Heart left ventricle (tissue), 16 donors: ENCODE measurements at regions of chr5 and their contacts with region 1.

Region 1: DNA sequence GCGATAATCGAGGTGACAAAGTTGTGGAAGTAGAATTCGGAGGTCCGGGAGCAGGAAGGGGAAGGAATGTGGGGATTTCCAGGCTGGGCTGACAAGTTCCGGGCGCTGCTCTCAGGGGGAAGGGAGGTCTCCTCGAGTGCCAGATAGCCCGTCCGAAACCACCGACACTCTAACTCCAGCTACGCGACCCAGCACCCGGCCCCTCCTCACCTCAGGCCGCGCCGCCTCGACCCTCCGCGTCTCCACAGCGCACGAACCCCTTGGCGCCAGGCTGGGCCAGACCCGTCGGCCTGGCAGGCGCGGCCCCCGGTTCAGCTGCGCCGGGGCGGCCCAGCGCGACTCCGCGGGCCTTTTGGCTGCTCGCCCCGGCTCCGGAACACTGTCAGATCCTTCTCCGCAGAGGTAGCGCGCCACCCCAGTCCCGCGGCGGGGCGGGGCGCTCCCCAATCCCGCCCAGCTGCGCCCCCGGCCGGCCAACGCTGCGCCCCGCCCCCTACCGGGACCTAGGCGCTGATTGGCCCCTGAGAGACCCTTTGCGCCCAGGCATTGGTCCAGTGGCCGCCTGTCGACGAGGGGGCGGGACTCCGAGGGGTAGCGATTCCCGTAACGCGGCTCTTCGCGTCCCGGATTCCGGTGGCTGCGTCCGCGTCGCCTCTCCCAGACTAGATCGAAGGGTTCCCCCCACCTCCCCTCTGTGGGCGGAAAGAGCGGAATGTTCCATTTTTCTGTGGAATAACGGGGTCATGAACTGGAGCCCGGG is at the start of gene IL6ST:
- DNase-seq: peak; percentile 98 to 99 (median 99)
- ATAC-seq: peak; percentile 98 to 99 (median 98)
- H3K4me3 ChIP-seq: peak within 1 kb of the TSS; percentile 55 to 95 (median 82)
- H3K27ac ChIP-seq: peak within 1 kb of the TSS; percentile 98 to 100 (median 99)
- H3K4me1 ChIP-seq: peaks cover 3 to 46% (median 28%) of the 10 kb centered on the region in 12 donors
- H3K27me3 ChIP-seq: no peaks in the 10 kb centered on the region
- CTCF ChIP-seq: peak in 8 of 12 donors; percentile 14 to 59 (median 26)
- POLR2A ChIP-seq: peak; percentile 51 to 93
- total RNA-seq, gene IL6ST: 106 to 239 (median 160) TPM

Region 2: GRCh38 chr5:55885359-55885758 is 109.4 kb before region 1 on chr5:
- intact Hi-C with region 1: no loop called
- DNase-seq: no peak
- ATAC-seq: no peak
- H3K4me3 ChIP-seq: no peak overlapping the region
- H3K27ac ChIP-seq: no peak overlapping the region
- H3K4me1 ChIP-seq: no peaks in the 10 kb centered on the region
- H3K27me3 ChIP-seq: no peaks in the 10 kb centered on the region
- CTCF ChIP-seq: no peak
- POLR2A ChIP-seq: no peak

Region 3: GRCh38 chr5:56039985-56040384 is 45.2 kb after region 1 on chr5:
- intact Hi-C with region 1: loop called in 1 of 10 experiments (anchors 5 kb)
- DNase-seq: no peak
- ATAC-seq: no peak
- H3K4me3 ChIP-seq: no peak overlapping the region
- H3K27ac ChIP-seq: peak overlapping the region in 1 of 12 donors; percentile 60
- H3K4me1 ChIP-seq: peaks cover 0 to 35% (median 4%) of the 10 kb centered on the region in 12 donors
- H3K27me3 ChIP-seq: no peaks in the 10 kb centered on the region
- CTCF ChIP-seq: no peak
- POLR2A ChIP-seq: no peak

Region 4: GRCh38 chr5:56056875-56057274 is 62.1 kb after region 1 on chr5:
- intact Hi-C with region 1: loop called in 3 of 10 experiments (anchors 5 kb)
- DNase-seq: no peak
- ATAC-seq: no peak
- H3K4me3 ChIP-seq: no peak overlapping the region
- H3K27ac ChIP-seq: no peak overlapping the region
- H3K4me1 ChIP-seq: peaks cover 0 to 30% (median 8%) of the 10 kb centered on the region in 12 donors
- H3K27me3 ChIP-seq: no peaks in the 10 kb centered on the region
- CTCF ChIP-seq: no peak
- POLR2A ChIP-seq: no peak

Region 5: DNA sequence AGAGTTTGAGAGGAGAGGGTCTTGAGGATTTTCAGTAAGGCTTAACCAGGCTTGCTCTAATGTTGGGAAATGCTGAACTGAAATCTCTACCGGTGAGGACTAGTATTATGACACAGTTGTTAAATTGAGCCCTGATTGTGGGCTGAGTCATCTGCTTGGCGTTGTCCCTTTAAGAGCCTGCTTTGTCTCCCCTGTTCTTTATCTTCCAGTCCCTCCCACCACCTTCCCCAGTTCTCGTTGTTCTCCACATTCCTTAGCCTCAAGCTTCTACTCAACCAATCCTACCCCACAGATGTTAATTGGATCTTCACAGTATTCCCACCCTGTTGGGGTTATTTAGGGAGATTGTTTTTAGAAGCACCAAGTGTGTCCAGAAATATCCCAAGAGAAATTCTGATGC is 180.7 kb after region 1 on chr5:
- intact Hi-C with region 1: loop called in 4 of 10 experiments (anchors 5 to 10 kb)
- DNase-seq: peak in 4 of 5 donors; percentile 35 to 49 (median 39)
- ATAC-seq: peak; percentile 53 to 90 (median 82)
- H3K4me3 ChIP-seq: no peak overlapping the region
- H3K27ac ChIP-seq: peak overlapping the region in 9 of 12 donors; percentile 11 to 66 (median 49)
- H3K4me1 ChIP-seq: peaks cover 0 to 63% (median 21%) of the 10 kb centered on the region in 12 donors
- H3K27me3 ChIP-seq: no peaks in the 10 kb centered on the region
- CTCF ChIP-seq: no peak
- POLR2A ChIP-seq: no peak

Region 6: GRCh38 chr5:57173185-57174127 is 1178.7 kb after region 1 on chr5 and contains the start of gene GPBP1:
- intact Hi-C with region 1: loop called in 1 of 10 experiments (anchors 10 kb)
- DNase-seq: peak; percentile 99
- ATAC-seq: peak; percentile 91 to 95 (median 94)
- H3K4me3 ChIP-seq: peak within 1 kb of the TSS; percentile 71 to 98 (median 89)
- H3K27ac ChIP-seq: peak within 1 kb of the TSS; percentile 94 to 100 (median 99)
- H3K4me1 ChIP-seq: peaks cover 8 to 45% (median 26%) of the 10 kb centered on the region in 12 donors
- H3K27me3 ChIP-seq: no peaks in the 10 kb centered on the region
- CTCF ChIP-seq: peak in 1 of 12 donors; percentile 3
- POLR2A ChIP-seq: peak in 1 of 2 donors; percentile 45
- total RNA-seq, gene GPBP1: 41.8 to 60.9 (median 50.1) TPM